Activated CD4-positive, alpha-beta T cell treated with anti-CD3 and anti-CD28 coated beads for 36 hours (primary cell): ENCODE measurements at regions of chr2 and their contacts with region 1.

Region 1: DNA sequence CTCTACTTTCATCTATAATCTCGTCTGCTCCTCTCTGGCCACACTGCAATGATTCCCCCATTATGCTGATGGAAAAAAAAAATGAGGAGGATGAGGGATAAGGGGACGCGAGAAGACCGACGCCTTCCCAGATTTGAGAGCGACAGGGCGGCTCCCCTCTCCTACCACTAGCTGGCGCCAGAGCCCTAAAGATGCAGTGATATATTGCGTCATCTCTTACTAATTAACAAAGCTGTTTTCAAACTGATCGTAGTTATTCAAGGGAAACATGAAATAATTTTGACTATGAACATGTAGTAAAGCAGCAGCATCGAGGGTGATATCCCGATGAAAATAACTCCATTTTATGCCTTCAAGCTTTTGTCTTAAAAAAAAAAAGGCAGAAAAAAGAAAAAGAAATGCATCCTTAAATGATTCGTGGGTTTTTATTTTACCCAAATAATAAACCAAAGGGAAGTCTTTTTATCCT is 48.0 kb upstream of the HNRNPA3 start:
- DNase-seq: peak; percentile 89
- ATAC-seq: peak; percentile 68
- H3K4me3 Mint-ChIP-seq: no peak overlapping the region
- H3K27ac Mint-ChIP-seq: no peak overlapping the region
- H3K4me1 Mint-ChIP-seq: peaks cover 24% of the 10 kb centered on the region
- H3K27me3 Mint-ChIP-seq: no peaks in the 10 kb centered on the region

Region 2: GRCh38 chr2:176242276-176242675 is 922.3 kb before region 1 on chr2:
- CTCF ChIA-PET with region 1: no interaction called
- POLR2A ChIA-PET with region 1: no interaction called
- intact Hi-C with region 1: no loop called
- DNase-seq: no peak
- ATAC-seq: no peak
- H3K4me3 Mint-ChIP-seq: no peak overlapping the region
- H3K27ac Mint-ChIP-seq: no peak overlapping the region
- H3K4me1 Mint-ChIP-seq: no peaks in the 10 kb centered on the region
- H3K27me3 Mint-ChIP-seq: peaks cover 27% of the 10 kb centered on the region

Region 3: GRCh38 chr2:177195194-177195593 is 30.6 kb after region 1 on chr2:
- CTCF ChIA-PET with region 1: interaction called, 19 read pairs
- POLR2A ChIA-PET with region 1: no interaction called
- intact Hi-C with region 1: no loop called
- DNase-seq: no peak
- ATAC-seq: peak; percentile 51
- H3K4me3 Mint-ChIP-seq: no peak overlapping the region
- H3K27ac Mint-ChIP-seq: no peak overlapping the region
- H3K4me1 Mint-ChIP-seq: peaks cover 2% of the 10 kb centered on the region
- H3K27me3 Mint-ChIP-seq: no peaks in the 10 kb centered on the region

Region 4: DNA sequence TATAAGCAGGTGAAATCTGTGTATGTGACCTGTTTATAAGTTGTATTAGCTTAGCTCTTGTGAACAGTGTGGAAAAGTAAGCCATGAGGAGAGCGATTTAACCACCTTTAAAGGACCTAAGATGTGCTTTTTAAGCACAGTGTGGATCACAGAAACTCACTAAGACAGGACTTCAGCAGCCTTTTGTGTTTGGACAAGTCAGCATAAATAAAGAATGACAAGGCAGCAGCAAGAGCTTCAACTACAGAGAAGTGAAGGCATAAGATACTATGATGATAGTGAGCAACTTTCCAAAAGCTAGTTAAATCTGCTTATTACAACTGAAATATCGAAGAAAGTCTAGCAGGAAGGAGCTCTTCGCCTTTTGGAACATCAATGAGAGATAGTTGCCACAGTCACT is 56.9 kb after region 1 on chr2:
- CTCF ChIA-PET with region 1: interaction called, 12 read pairs
- POLR2A ChIA-PET with region 1: interaction called, 3 read pairs
- intact Hi-C with region 1: no loop called
- DNase-seq: no peak
- ATAC-seq: no peak
- H3K4me3 Mint-ChIP-seq: no peak overlapping the region
- H3K27ac Mint-ChIP-seq: peak overlapping the region; percentile 17
- H3K4me1 Mint-ChIP-seq: peaks cover 53% of the 10 kb centered on the region
- H3K27me3 Mint-ChIP-seq: no peaks in the 10 kb centered on the region

Region 5: DNA sequence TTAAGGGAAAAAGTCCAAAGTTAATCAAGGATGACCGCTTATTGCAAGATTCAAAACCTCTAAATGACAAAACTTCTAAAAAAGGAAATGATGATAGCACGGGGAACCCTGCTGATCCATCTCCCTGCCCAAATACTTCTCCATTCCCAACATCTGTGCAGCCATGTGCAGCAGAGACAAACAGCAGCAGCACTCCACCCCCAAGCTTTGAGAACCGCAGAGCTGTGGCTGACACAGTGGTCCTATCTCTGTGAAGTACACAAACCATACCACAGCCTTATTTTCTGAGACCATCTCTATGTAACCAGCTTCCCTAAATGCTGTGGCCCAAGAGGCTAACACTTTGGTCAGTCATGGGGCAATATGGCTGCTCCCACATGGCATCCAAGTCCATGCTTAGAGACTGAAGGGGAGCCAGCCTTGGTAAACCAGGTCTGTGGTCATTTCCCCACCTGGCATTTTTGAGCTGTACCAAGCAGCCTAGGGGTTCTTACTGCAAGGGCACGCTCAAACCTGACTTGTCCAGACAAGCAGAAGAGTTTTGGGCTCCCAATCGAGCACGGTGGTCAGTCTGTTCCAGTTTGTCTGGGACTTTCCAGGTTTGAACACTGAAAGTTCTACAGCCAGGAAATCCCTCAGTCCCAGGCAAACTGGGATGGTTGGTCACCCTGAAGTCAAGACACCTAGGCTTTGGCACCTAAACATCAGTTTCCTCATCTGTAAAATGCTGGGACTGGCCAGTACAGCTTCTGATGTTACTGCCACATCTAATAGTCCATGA is 117.0 kb after region 1 on chr2:
- CTCF ChIA-PET with region 1: interaction called, 17 read pairs
- POLR2A ChIA-PET with region 1: interaction called, 4 read pairs
- intact Hi-C with region 1: no loop called
- DNase-seq: no peak
- ATAC-seq: no peak
- H3K4me3 Mint-ChIP-seq: no peak overlapping the region
- H3K27ac Mint-ChIP-seq: no peak overlapping the region
- H3K4me1 Mint-ChIP-seq: peaks cover 9% of the 10 kb centered on the region
- H3K27me3 Mint-ChIP-seq: no peaks in the 10 kb centered on the region

Region 6: DNA sequence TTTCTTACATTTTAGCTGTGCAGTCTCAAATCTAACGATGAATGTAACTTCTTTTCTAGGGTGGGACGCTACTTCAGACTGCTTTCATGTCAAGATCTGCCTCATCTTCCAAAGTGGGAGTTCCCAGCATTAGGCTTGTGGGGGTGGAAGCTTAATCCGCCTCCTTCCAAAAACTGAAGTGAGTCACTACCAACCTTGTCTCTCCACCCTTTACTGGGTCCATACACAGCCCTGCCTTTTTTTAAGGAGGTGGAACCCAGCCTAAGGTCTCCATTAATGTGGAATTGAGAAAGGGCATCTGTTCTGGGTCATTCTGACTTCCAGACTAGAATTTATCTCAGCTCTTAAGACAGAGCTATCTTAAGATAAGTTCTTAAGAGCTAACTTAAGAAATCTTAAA is 141.9 kb after region 1 on chr2:
- CTCF ChIA-PET with region 1: interaction called, 20 read pairs
- POLR2A ChIA-PET with region 1: no interaction called
- intact Hi-C with region 1: no loop called
- DNase-seq: no peak
- ATAC-seq: no peak
- H3K4me3 Mint-ChIP-seq: no peak overlapping the region
- H3K27ac Mint-ChIP-seq: no peak overlapping the region
- H3K4me1 Mint-ChIP-seq: peaks cover 27% of the 10 kb centered on the region
- H3K27me3 Mint-ChIP-seq: no peaks in the 10 kb centered on the region

Region 7: DNA sequence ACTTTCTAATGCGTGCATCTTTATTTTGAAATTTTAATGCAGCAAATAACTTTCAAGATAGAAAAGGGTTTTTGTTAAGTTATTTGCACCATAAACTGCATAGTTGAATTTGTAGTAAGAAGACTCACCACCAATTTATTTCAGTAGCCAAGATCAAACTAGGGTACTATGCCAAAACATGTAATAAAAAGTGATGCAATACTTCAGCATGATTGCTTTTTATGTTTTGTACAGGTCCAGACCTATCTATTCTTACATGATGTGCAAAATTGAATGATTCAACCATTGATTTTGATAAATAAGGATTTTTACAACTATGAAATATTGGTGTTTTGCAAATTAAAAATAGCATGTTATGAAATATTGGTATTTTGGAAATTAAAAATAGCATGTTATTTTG is 254.7 kb after region 1 on chr2:
- CTCF ChIA-PET with region 1: interaction called, 64 read pairs
- POLR2A ChIA-PET with region 1: no interaction called
- intact Hi-C with region 1: loop called (anchors 1 kb)
- DNase-seq: no peak
- ATAC-seq: no peak
- H3K4me3 Mint-ChIP-seq: no peak overlapping the region
- H3K27ac Mint-ChIP-seq: peak overlapping the region; percentile 80
- H3K4me1 Mint-ChIP-seq: peaks cover 34% of the 10 kb centered on the region
- H3K27me3 Mint-ChIP-seq: no peaks in the 10 kb centered on the region

Region 8: DNA sequence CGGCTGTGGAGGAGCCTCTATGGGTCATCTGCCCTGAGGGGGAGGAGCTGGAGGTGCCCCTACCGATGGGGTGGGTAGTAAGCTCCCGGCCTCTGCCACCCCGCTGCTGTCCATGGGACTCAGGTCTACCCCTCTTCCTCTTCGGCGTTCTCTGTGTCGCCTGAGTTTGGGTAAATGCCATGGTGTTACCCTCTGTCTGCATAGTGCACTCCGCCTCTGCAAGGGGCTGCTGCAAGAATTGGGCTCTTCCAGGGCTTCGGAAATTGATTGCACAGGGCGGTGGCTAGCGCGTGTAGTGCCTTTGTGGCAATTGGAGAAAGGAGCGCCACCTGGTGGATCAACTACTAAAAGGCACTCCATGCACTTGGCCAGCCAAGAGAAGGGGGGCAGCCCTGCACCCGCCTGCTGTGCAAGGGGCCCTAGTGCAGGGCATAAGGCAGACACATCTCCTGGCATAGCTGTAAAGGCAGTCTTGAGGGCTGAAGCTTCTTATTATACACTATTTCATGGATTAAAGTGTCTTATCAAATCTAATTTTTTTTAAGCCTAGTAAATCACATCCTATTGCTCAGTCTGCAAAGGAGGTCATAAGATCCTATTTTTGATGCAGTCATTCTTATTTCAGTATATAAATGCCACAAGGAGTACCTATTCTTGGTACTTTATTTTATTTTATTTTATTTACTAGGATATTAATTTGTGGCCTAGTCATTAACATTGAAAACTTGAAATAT is 599.1 kb after region 1 on chr2:
- CTCF ChIA-PET with region 1: interaction called, 8 read pairs
- POLR2A ChIA-PET with region 1: no interaction called
- intact Hi-C with region 1: loop called in 1 of 2 experiments (anchors 2 kb)
- DNase-seq: peak; percentile 90
- ATAC-seq: peak; percentile 99
- H3K4me3 Mint-ChIP-seq: no peak overlapping the region
- H3K27ac Mint-ChIP-seq: no peak overlapping the region
- H3K4me1 Mint-ChIP-seq: peaks cover 3% of the 10 kb centered on the region
- H3K27me3 Mint-ChIP-seq: peaks cover 11% of the 10 kb centered on the region

Region 9: GRCh38 chr2:178195390-178196166 is 1031.0 kb after region 1 on chr2:
- CTCF ChIA-PET with region 1: no interaction called
- POLR2A ChIA-PET with region 1: no interaction called
- intact Hi-C with region 1: no loop called
- DNase-seq: no peak
- ATAC-seq: no peak
- H3K4me3 Mint-ChIP-seq: peak overlapping the region; percentile 67
- H3K27ac Mint-ChIP-seq: no peak overlapping the region
- H3K4me1 Mint-ChIP-seq: peaks cover 7% of the 10 kb centered on the region
- H3K27me3 Mint-ChIP-seq: peaks cover 47% of the 10 kb centered on the region